GM18951 (cell line): ENCODE measurements at regions of chr4 and their contacts with region 1.

Region 1: DNA sequence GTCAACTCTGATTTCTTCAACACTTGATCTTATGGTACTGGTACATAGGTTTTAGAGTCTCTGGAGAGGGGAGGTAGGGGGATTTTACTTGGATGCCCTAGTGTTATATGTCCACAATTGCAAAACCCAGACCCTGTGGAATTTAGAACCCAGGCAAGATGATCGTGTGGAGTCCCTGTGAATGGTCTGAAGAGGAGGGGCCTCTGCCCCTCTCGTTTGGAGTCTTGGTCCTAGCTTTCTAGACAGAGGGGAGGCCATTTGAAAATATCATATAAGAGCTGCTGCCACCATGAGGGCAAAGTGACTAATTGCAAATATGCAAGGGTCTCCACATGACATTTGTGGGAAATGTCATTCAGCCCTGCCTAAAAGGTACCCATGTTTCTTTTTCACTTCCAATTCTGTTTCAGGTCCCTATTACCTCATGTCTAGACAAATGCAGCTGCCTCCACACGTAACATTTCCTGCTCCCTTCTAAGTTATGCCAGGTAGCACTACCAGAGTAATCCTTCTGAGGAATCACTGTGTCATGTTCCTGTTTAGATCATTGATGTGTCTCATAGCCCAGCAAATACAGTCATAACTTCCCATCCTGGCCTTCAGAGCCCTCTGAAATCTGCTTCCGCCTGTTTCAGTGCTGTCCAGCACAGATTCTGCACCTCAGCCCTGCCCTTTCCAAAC is 126.8 kb downstream of the KLHL8 start:
- POLR2A ChIP-seq: no peak

Region 2: GRCh38 chr4:86924811-86925210 is 168.8 kb before region 1 on chr4:
- in situ Hi-C with region 1: loop called (anchors 5 kb)
- POLR2A ChIP-seq: no peak